BJ (cell line): ENCODE measurements at regions of chr1 and their contacts with region 1.

Region 1: GRCh38 chr1:110766025-110766647 is 91.4 kb upstream of the KCNA3 start:
- DNase-seq: no peak
- H3K4me3 ChIP-seq: no peak overlapping the region
- H3K27me3 ChIP-seq: no peaks in the 10 kb centered on the region
- CTCF ChIP-seq: peak; percentile 79

Region 2: DNA sequence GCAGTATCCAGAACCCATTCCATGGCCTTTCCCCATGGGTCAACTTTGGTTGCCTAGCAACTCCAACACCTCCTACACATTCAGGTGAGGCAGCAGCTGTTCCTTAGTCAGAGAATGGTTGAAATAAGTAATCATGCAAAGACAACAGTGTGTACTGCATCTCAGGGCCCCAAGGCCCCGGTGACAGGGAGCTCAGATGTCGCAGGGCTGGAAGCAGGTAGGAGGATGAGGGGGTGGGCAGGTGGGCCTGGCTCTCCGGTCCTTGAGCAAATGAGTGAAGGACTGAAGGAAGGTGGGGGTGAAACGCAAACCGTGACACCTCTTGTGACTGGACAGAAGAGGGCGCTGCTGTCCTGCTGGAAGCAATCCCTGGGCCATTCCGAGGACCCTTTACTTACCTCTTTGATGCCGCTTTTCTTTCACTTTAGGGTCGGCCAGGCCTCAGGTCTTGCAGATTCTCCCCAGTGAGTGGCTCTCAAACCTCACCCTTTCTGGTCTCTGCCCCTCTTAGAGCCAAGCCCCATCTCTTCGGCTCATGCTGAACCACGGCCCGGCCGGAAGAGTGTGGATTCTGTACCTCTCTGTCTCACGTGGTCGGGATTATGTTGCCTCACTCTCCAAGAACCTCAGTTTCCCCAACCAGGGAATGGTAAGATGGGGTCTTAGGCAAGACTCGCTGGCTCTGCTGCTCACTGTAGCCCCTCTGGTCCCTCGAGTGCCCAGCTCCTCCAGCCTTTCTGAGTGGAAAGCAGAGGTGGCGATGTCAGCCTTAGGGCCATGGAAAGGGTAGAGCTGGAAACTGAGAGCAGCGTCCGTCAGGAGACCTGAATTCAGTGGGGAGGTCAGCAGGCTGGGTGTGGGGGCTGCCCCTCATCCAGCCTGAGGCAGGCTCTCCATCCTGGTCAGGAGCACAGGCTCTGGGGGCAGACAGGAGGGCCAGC is 241.6 kb before region 1 on chr1:
- CTCF ChIA-PET with region 1: interaction called, 10 read pairs
- POLR2A ChIA-PET with region 1: no interaction called
- DNase-seq: no peak
- H3K4me3 ChIP-seq: no peak overlapping the region
- H3K27me3 ChIP-seq: peaks cover 14% of the 10 kb centered on the region
- CTCF ChIP-seq: peak; percentile 66

Region 3: GRCh38 chr1:110619412-110620249 is 146.5 kb before region 1 on chr1:
- CTCF ChIA-PET with region 1: interaction called, 38 read pairs
- POLR2A ChIA-PET with region 1: no interaction called
- DNase-seq: no peak
- H3K4me3 ChIP-seq: no peak overlapping the region
- H3K27me3 ChIP-seq: peaks cover 9% of the 10 kb centered on the region
- CTCF ChIP-seq: peak; percentile 89

Region 4: GRCh38 chr1:110630839-110631663 is 135.1 kb before region 1 on chr1:
- CTCF ChIA-PET with region 1: interaction called, 66 read pairs
- POLR2A ChIA-PET with region 1: no interaction called
- DNase-seq: no peak
- H3K4me3 ChIP-seq: no peak overlapping the region
- H3K27me3 ChIP-seq: no peaks in the 10 kb centered on the region
- CTCF ChIP-seq: peak; percentile 91

Region 5: DNA sequence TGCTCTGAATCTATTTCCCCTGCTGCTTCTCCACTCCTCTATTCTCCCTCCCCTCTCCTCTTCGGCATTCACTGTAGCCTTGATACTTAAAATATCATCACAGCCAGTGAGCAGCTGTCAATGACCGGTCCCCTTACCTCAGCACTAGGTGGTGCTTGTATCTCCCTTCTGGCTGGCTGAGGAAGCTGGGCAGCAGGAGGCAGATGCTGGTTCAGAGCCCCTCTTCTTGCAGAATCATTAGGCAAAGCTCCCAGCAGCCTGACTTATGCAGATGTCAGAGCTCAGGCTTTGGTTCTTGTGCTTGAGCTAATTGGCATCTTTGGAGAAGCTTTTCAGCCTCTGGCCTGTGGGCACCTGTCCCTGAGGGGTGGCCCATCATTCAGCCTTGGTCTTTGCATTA is 128.1 kb before region 1 on chr1:
- CTCF ChIA-PET with region 1: interaction called, 22 read pairs
- POLR2A ChIA-PET with region 1: no interaction called
- DNase-seq: no peak
- H3K4me3 ChIP-seq: no peak overlapping the region
- H3K27me3 ChIP-seq: no peaks in the 10 kb centered on the region; the same call in 1 of the 2 replicates
- CTCF ChIP-seq: no peak

Region 6: DNA sequence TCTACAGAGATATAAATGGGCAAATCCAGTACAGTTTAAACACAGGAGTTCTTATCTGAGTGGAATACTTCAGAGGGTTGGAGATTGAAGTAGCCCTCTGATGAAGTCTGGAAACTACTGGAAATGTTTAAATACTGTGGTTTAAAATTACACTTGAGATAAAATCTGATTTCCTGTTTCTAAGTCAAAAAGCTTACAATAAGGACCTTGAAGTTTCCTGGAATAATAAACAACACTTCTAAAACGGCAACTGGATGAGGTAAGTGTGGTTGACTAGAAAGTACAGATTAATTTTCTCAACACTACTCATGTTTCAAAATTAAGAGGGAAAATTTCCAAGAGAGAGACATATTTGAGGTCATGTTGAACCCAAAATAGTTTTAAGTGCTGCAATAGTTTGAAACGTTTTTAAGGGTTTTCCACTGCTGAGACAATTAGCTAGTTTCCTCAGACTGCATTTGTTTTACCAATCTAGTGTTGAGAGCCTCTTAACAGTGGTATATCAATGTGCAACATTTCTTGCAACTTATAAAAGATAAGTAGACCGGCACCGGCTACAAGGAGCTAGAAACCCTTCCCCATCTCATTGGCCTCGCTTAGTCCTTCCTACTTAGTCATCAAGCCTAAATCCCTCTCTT is 118.8 kb before region 1 on chr1:
- CTCF ChIA-PET with region 1: interaction called, 12 read pairs
- POLR2A ChIA-PET with region 1: no interaction called
- DNase-seq: peak; percentile 32
- H3K4me3 ChIP-seq: no peak overlapping the region
- H3K27me3 ChIP-seq: no peaks in the 10 kb centered on the region
- CTCF ChIP-seq: no peak

Region 7: GRCh38 chr1:110696818-110697217 is 69.3 kb before region 1 on chr1:
- CTCF ChIA-PET with region 1: no interaction called
- POLR2A ChIA-PET with region 1: no interaction called
- DNase-seq: no peak
- H3K4me3 ChIP-seq: no peak overlapping the region
- H3K27me3 ChIP-seq: no peaks in the 10 kb centered on the region
- CTCF ChIP-seq: no peak

Region 8: GRCh38 chr1:110780600-110781484 is 14.7 kb after region 1 on chr1:
- CTCF ChIA-PET with region 1: interaction called, 41 read pairs
- POLR2A ChIA-PET with region 1: no interaction called
- DNase-seq: no peak
- H3K4me3 ChIP-seq: no peak overlapping the region
- H3K27me3 ChIP-seq: peaks cover 5% of the 10 kb centered on the region
- CTCF ChIP-seq: peak; percentile 80